Gastrocnemius medialis (tissue), 4 donors: ENCODE measurements at regions of chr22 and their contacts with region 1.

Region 1: DNA sequence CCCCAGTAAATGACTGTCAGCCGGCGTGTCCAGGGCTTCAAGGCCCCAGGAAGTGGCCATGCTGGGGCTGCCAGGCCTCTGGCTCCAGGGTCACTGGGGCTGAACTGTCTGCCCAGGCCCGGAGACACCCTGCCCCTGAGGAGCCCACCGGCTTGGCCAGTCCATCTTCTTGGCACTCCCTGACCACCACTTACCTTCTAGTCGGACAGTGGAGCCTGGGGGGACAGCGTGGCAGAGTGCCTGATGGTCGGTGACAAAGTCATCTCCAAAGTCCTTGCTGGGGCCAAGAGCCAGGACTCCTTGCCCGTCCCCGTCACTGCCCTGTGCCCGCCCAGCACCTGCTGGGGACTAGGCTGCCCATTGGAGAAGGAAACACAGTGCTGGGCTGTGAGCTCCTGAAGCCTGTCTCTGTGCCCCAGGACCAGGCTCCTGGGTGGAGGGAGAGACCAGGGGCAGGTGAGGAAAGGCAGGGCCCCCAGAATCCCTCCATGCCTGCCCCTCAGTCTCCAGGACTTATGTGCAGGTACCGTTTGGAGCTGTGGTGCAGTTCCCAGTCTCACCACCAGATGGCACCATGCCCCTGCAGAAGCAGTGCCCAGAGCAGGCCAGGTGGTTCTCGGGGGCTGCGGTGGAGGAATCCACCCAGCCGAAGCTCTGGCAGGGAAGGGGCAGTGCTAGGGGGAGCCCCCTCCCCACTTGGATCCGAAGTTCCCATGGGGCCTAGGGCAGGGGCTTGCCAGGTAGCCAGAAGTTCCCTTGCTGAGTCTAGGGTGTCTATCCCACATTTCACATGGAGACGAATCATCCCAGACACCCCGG is 6.0 kb upstream of the CCDC188 start:
- DNase-seq: peak; percentile 63 to 75
- ATAC-seq: peak; percentile 65 to 89
- H3K4me3 ChIP-seq: no peak overlapping the region
- H3K27ac ChIP-seq: no peak overlapping the region
- H3K4me1 ChIP-seq: no peaks in the 10 kb centered on the region
- H3K27me3 ChIP-seq: no peaks in the 10 kb centered on the region
- CTCF ChIP-seq: peak; percentile 98 to 100 (median 99)
- POLR2A ChIP-seq: no peak

Region 2: DNA sequence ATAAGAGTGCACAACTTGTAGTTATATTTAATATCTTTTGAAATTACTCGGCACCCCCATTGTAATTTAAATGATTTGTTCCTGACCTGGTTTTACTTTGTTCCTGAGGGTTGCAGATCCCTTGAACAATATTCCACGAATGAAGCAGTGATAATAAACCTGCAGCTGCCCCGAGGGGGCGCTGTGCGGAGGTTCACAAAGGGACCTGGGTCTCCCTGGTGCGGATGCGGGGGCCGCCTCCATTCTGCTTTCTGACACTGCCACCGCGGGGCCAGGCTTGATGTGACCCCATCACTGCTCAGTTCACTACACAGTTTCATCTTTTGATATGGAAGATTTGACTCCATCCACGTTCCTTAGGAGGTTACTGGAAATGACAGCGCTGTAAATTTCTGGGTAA is 1157.8 kb before region 1 on chr22:
- in situ Hi-C with region 1: no loop called
- intact Hi-C with region 1: no loop called
- DNase-seq: no peak
- ATAC-seq: no peak
- H3K4me3 ChIP-seq: no peak overlapping the region
- H3K27ac ChIP-seq: no peak overlapping the region
- H3K4me1 ChIP-seq: no peaks in the 10 kb centered on the region
- H3K27me3 ChIP-seq: peaks cover 5 to 16% (median 15%) of the 10 kb centered on the region in 3 donors
- CTCF ChIP-seq: no peak
- POLR2A ChIP-seq: no peak

Region 3: GRCh38 chr22:20268279-20269012 is 111.6 kb after region 1 on chr22 and contains the start of gene RTN4R:
- in situ Hi-C with region 1: no loop called
- intact Hi-C with region 1: loop called (anchors 5 kb)
- DNase-seq: peak in 1 of 2 donors; percentile 23
- ATAC-seq: peak; percentile 65 to 74
- H3K4me3 ChIP-seq: peak within 1 kb of the TSS; percentile 23 to 42 (median 28)
- H3K27ac ChIP-seq: peak within 1 kb of the TSS in 1 of 4 donors; percentile 46
- H3K4me1 ChIP-seq: no peaks in the 10 kb centered on the region
- H3K27me3 ChIP-seq: peaks cover 0 to 5% (median 0%) of the 10 kb centered on the region in 3 donors
- CTCF ChIP-seq: peak in 4 of 5 experiments; percentile 61 to 80 (median 72)
- POLR2A ChIP-seq: no peak
- total RNA-seq, gene RTN4R: 0.29 to 0.75 TPM in 2 of 4 donors, not detected in the others

Region 4: GRCh38 chr22:20284471-20285086 is 127.8 kb after region 1 on chr22:
- in situ Hi-C with region 1: no loop called
- intact Hi-C with region 1: loop called (anchors 1 kb)
- DNase-seq: no peak
- ATAC-seq: no peak
- H3K4me3 ChIP-seq: no peak overlapping the region
- H3K27ac ChIP-seq: no peak overlapping the region
- H3K4me1 ChIP-seq: no peaks in the 10 kb centered on the region
- H3K27me3 ChIP-seq: no peaks in the 10 kb centered on the region
- CTCF ChIP-seq: no peak
- POLR2A ChIP-seq: no peak

Region 5: GRCh38 chr22:20298803-20299735 is 142.2 kb after region 1 on chr22:
- in situ Hi-C with region 1: loop called (anchors 10 kb)
- intact Hi-C with region 1: no loop called
- DNase-seq: peak; percentile 52 to 83
- ATAC-seq: peak; percentile 76 to 80
- H3K4me3 ChIP-seq: peak overlapping the region; percentile 59 to 67 (median 62)
- H3K27ac ChIP-seq: peak overlapping the region in 2 of 4 donors; percentile 24 to 54
- H3K4me1 ChIP-seq: peaks cover 4 to 7% of the 10 kb centered on the region in 2 donors
- H3K27me3 ChIP-seq: peaks cover 17 to 25% (median 22%) of the 10 kb centered on the region in 3 donors
- CTCF ChIP-seq: no peak
- POLR2A ChIP-seq: no peak